Caco-2 (cell line): ENCODE measurements at regions of chr10 and their contacts with region 1.

Region 1: GRCh38 chr10:69573056-69573806 is at the start of gene NEUROG3:
- DNase-seq: peak in 1 of 2 experiments; percentile 61
- H3K4me3 ChIP-seq: peak within 1 kb of the TSS; percentile 10; the same call in 1 of the 2 replicates
- H3K4me3 Mint-ChIP-seq: peak within 1 kb of the TSS; percentile 53
- H3K27ac Mint-ChIP-seq: no peak within 1 kb of the TSS
- H3K4me1 ChIP-seq: peaks cover 12% of the 10 kb centered on the region
- H3K4me1 Mint-ChIP-seq: peaks cover 7% of the 10 kb centered on the region
- H3K27me3 ChIP-seq: peaks cover 25% of the 10 kb centered on the region
- H3K27me3 Mint-ChIP-seq: peaks cover 55% of the 10 kb centered on the region
- CTCF ChIP-seq: no peak
- total RNA-seq, gene NEUROG3: not detected in 2 replicates

Region 2: GRCh38 chr10:69639291-69640195 is 66.3 kb after region 1 on chr10:
- CTCF ChIA-PET with region 1: interaction called, 10 read pairs
- POLR2A ChIA-PET with region 1: no interaction called
- intact Hi-C with region 1: loop called (anchors 5 kb)
- DNase-seq: peak; percentile 83 to 85
- H3K4me3 ChIP-seq: no peak overlapping the region
- H3K4me3 Mint-ChIP-seq: no peak overlapping the region
- H3K27ac Mint-ChIP-seq: no peak overlapping the region
- H3K4me1 ChIP-seq: no peaks in the 10 kb centered on the region
- H3K4me1 Mint-ChIP-seq: no peaks in the 10 kb centered on the region
- H3K27me3 ChIP-seq: 0 out of 2 replicates have a peak, but pooled peaks cover 1% of the 10 kb centered on the region
- H3K27me3 Mint-ChIP-seq: peaks cover 7% of the 10 kb centered on the region
- CTCF ChIP-seq: peak; percentile 97 to 99

Region 3: GRCh38 chr10:69657430-69657829 is 84.2 kb after region 1 on chr10:
- CTCF ChIA-PET with region 1: interaction called, 16 read pairs
- POLR2A ChIA-PET with region 1: no interaction called
- intact Hi-C with region 1: no loop called
- DNase-seq: no peak
- H3K4me3 ChIP-seq: no peak overlapping the region
- H3K4me3 Mint-ChIP-seq: no peak overlapping the region
- H3K27ac Mint-ChIP-seq: no peak overlapping the region
- H3K4me1 ChIP-seq: no peaks in the 10 kb centered on the region
- H3K4me1 Mint-ChIP-seq: no peaks in the 10 kb centered on the region
- H3K27me3 ChIP-seq: no peaks in the 10 kb centered on the region; the same call in 1 of the 2 replicates
- H3K27me3 Mint-ChIP-seq: peaks cover 28% of the 10 kb centered on the region
- CTCF ChIP-seq: no peak

Region 4: GRCh38 chr10:69769395-69769992 is 196.3 kb after region 1 on chr10:
- CTCF ChIA-PET with region 1: no interaction called
- POLR2A ChIA-PET with region 1: no interaction called
- intact Hi-C with region 1: no loop called
- DNase-seq: peak in 1 of 2 experiments; percentile 28
- H3K4me3 ChIP-seq: no peak overlapping the region
- H3K4me3 Mint-ChIP-seq: no peak overlapping the region
- H3K27ac Mint-ChIP-seq: no peak overlapping the region
- H3K4me1 ChIP-seq: peaks cover 5% of the 10 kb centered on the region; the same call in 1 of the 2 replicates
- H3K4me1 Mint-ChIP-seq: no peaks in the 10 kb centered on the region
- H3K27me3 ChIP-seq: no peaks in the 10 kb centered on the region; the same call in none of the 2 replicates
- H3K27me3 Mint-ChIP-seq: peaks cover 17% of the 10 kb centered on the region
- CTCF ChIP-seq: no peak